Activated T-helper 1 cell treated with anti-CD3 and anti-CD28 coated beads, Interleukin-12 subunit alpha, Interleukin-12 subunit beta, Interleukin-2, Interleukin-4 antibody, amounts not matched to agents 30 ng/mL and 10 ng/mL and 1 ng/mL, durations not matched to agents 14 hours and 24 hours and 36 hours (primary cell): ENCODE measurements at regions of chr20 and their contacts with region 1.

Region 1: DNA sequence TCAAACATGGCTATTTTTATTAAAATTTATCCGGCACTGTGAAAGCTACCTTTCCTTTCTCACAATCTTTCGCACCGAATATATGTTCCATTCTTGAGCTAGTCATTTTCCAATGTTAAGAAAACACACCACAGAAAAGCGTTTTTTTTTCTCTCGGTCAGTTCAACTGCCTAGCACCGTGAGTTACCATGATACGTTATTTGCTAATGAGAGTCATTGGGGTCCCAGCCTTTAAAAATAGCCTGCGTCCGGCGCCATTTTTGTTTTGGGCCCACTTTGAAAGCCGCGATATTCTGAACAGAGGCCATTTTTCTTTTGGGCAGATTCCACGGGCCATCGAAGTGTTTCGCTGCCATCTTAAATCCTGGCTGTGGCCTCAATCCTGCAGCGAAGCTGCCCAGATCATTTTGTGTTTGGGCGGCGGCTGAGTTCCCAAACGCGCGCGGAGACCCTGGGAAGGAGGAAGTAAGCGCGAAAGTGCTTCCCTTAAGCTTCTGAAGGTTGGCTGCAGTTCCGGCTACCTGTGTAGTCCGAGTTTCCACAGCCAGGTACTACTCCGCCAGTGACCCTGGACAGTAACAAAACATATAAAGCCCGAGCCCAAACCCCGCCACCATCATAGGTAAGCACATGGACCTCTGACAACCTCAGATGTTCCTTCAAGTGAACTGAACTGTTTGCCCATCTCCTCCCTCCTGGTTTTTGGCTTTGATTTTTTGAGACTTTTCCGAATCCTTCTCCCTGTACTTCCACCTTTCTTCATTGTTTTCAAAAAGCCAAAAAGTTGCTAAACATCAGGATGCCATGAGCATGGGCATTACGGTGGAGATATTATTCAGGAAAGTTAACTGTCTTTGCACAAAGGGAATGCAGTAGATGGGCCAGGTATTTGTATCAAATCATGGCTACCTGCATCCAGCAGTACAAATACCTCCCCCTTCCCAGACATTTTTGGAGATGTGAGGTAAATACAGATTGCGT is at the start of gene SLX4IP:
- DNase-seq: peak; percentile 77
- H3K4me3 Mint-ChIP-seq: peak within 1 kb of the TSS; percentile 94
- H3K27ac Mint-ChIP-seq: peak within 1 kb of the TSS; percentile 97
- H3K4me1 Mint-ChIP-seq: peaks cover 28% of the 10 kb centered on the region
- H3K27me3 Mint-ChIP-seq: no peaks in the 10 kb centered on the region
- total RNA-seq, gene SLX4IP: 5.0 and 5.8 TPM in 2 replicates

Region 2: DNA sequence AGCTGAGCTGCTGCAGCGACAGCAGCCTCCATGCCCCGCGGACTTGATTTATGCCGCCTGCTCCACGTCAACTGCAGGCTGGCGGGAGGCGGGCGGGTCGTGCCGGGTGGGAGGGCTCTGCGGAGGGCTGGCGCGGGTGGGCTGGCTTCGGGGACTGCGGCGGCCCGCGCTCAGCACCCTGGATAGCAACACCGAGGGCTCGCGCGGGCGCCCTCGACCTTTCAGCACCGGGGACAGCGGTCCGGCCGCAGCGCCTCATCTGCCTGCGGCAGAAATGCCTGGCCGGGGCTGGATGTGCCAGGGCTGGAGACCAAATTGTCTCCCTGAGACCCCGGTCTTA is 215.7 kb before region 1 on chr20:
- intact Hi-C with region 1: loop called (anchors 2 kb)
- DNase-seq: peak; percentile 59
- H3K4me3 Mint-ChIP-seq: peak overlapping the region; percentile 72
- H3K27ac Mint-ChIP-seq: no peak overlapping the region
- H3K4me1 Mint-ChIP-seq: peaks cover 12% of the 10 kb centered on the region
- H3K27me3 Mint-ChIP-seq: peaks cover 19% of the 10 kb centered on the region

Region 3: GRCh38 chr20:10501402-10501801 is 66.3 kb after region 1 on chr20:
- intact Hi-C with region 1: loop called (anchors 2 kb)
- DNase-seq: peak; percentile 9
- H3K4me3 Mint-ChIP-seq: peak overlapping the region; percentile 81
- H3K27ac Mint-ChIP-seq: peak overlapping the region; percentile 62
- H3K4me1 Mint-ChIP-seq: peaks cover 50% of the 10 kb centered on the region
- H3K27me3 Mint-ChIP-seq: no peaks in the 10 kb centered on the region

Region 4: DNA sequence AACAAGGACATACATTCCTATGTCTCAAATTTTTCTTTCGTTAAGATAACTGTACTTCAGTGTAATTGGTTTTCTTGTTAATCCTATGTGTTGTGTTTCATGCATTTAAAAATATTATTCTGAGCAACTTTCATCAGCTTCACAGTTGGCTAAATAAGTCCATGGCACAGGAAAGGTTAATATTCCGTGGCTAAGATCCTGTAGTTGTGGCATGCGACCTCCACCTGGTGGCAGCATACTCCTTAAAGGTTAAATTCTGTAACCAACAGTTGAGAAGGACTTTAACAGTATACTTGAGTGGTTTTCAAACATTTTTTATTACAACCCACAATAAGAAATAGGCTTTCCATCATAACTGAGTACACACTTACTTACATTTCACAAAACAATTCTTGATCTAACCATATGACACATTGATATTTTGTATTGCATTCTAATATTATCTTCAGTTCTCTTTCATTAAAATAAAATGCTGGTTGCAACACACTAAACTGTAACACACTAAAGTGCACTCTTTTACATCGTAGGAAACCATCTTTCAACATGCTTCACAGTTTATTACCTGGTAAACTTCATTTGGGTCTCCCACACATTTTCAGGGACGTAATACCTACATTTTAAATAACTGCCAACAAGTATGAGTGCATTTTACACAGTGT is 118.3 kb after region 1 on chr20:
- intact Hi-C with region 1: loop called (anchors 1 kb)
- DNase-seq: peak; percentile 19
- H3K4me3 Mint-ChIP-seq: no peak overlapping the region
- H3K27ac Mint-ChIP-seq: no peak overlapping the region
- H3K4me1 Mint-ChIP-seq: peaks cover 39% of the 10 kb centered on the region
- H3K27me3 Mint-ChIP-seq: no peaks in the 10 kb centered on the region

Region 5: DNA sequence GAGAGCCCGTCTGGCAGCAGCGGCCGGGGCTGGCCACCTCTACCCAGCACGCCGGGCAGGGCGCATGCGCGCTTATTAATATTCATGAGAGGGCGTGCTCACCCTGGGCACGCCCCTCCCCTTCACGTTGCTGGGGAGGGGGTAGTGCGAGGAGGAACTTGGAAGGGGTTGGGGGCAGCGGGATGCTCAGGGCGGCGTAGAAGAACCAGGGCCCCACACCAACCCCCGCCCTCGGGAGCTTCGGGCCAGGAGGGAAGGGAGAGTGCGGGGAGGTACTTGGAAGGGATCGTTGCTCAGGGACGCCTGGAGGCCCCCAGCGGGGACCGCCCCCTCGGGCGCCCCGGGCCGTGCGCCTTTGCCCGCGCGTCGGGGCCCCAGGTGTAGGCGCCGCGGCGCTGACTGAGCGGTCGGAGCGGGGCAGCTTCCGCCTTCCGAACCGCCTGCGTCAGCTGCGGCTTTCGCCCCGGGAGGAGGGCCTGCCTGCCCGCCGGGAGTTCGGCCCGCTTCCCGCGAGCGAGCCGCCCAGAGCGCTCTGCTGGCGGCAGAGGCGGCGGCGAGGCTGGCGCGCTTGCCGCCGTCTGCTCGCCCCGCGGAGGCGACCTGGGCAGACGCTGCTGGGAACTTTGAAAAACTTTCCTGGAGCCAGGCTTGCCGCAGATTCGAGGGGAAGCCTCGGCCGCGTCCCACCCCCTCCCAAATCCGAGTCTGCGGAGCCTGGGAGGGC is 239.0 kb after region 1 on chr20 and contains the start of gene JAG1:
- intact Hi-C with region 1: loop called (anchors 1 kb)
- DNase-seq: peak; percentile 71
- H3K4me3 Mint-ChIP-seq: peak within 1 kb of the TSS; percentile 89
- H3K27ac Mint-ChIP-seq: peak within 1 kb of the TSS; percentile 92
- H3K4me1 Mint-ChIP-seq: peaks cover 26% of the 10 kb centered on the region
- H3K27me3 Mint-ChIP-seq: peaks cover 64% of the 10 kb centered on the region
- total RNA-seq, gene JAG1: 1.3 and 1.4 TPM in 2 replicates